SK-N-SH (cell line): ENCODE measurements at regions of chr11 and their contacts with region 1.

Region 1: GRCh38 chr11:75241036-75241905 is 697 bp downstream of the TPBGL start:
- DNase-seq: peak; percentile 98
- H3K4me3 ChIP-seq: peak overlapping the region; percentile 53
- H3K27ac ChIP-seq: no peak overlapping the region; a peak in 1 of 4 replicates
- H3K4me1 ChIP-seq: no peaks in the 10 kb centered on the region; a peak in 1 of 4 replicates
- H3K27me3 ChIP-seq: peaks cover 37% of the 10 kb centered on the region
- CTCF ChIP-seq: peak; percentile 60
- EP300 ChIP-seq: no peak
- RAD21 ChIP-seq: peak; percentile 71

Region 2: GRCh38 chr11:74473382-74474173 is 767.7 kb before region 1 on chr11:
- CTCF ChIA-PET with region 1: no interaction called
- POLR2A ChIA-PET with region 1: no interaction called
- DNase-seq: no peak
- H3K4me3 ChIP-seq: no peak overlapping the region
- H3K27ac ChIP-seq: no peak overlapping the region
- H3K4me1 ChIP-seq: peaks cover 0 to 2% of the 10 kb centered on the region in 2 experiments; a peak in 1 of 4 replicates
- H3K27me3 ChIP-seq: peaks cover 6% of the 10 kb centered on the region; the same call in 1 of the 2 replicates
- CTCF ChIP-seq: no peak
- EP300 ChIP-seq: no peak
- RAD21 ChIP-seq: no peak

Region 3: DNA sequence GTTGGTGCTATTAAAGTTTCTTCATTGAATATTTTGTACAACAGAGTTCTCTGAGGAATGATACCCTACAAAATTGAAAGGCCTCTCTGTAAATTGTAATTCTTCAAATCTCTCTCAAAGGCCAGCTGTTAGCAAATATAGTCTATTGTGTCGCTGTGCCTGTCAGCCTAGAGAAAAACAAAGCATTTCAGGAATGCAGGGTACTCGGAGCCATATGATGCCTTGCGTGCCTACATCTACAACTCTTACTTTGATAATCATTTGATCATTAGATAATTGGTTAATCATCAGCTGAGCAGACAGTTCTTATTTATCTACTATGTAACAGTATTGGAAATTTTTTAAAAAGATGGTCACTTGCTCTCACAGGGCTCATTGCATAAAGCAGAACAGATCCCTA is 425.3 kb before region 1 on chr11:
- CTCF ChIA-PET with region 1: no interaction called
- POLR2A ChIA-PET with region 1: no interaction called
- DNase-seq: no peak
- H3K4me3 ChIP-seq: no peak overlapping the region
- H3K27ac ChIP-seq: no peak overlapping the region
- H3K4me1 ChIP-seq: peaks cover 0 to 7% of the 10 kb centered on the region in 2 experiments; a peak in 1 of 4 replicates
- H3K27me3 ChIP-seq: no peaks in the 10 kb centered on the region
- CTCF ChIP-seq: no peak
- EP300 ChIP-seq: no peak
- RAD21 ChIP-seq: no peak

Region 4: DNA sequence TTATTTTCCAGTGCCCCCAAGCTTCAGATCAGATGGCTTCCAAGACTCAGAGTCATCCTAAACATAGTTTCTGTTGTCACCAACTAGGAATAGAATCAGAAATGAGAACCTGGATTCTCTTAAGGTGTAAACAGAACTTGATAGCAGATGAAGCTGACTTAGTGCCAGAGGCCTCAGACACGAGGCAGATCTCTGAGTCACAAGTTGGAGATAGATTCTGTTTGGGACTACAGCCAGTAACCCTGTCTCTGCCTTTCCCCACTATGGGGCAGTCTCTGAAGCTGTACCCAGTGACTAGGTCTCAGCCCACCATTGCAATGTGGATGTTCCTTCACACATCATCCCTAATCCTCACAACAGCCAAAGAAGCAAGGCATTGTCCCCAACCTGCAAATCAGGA is 227.1 kb before region 1 on chr11:
- CTCF ChIA-PET with region 1: interaction called, 17 read pairs
- POLR2A ChIA-PET with region 1: no interaction called
- DNase-seq: no peak
- H3K4me3 ChIP-seq: no peak overlapping the region
- H3K27ac ChIP-seq: peak overlapping the region; percentile 25 to 63; a peak in 3 of 4 replicates
- H3K4me1 ChIP-seq: peaks cover 0 to 9% of the 10 kb centered on the region in 2 experiments; a peak in 2 of 4 replicates
- H3K27me3 ChIP-seq: no peaks in the 10 kb centered on the region
- CTCF ChIP-seq: peak; percentile 45
- EP300 ChIP-seq: no peak
- RAD21 ChIP-seq: no peak

Region 5: DNA sequence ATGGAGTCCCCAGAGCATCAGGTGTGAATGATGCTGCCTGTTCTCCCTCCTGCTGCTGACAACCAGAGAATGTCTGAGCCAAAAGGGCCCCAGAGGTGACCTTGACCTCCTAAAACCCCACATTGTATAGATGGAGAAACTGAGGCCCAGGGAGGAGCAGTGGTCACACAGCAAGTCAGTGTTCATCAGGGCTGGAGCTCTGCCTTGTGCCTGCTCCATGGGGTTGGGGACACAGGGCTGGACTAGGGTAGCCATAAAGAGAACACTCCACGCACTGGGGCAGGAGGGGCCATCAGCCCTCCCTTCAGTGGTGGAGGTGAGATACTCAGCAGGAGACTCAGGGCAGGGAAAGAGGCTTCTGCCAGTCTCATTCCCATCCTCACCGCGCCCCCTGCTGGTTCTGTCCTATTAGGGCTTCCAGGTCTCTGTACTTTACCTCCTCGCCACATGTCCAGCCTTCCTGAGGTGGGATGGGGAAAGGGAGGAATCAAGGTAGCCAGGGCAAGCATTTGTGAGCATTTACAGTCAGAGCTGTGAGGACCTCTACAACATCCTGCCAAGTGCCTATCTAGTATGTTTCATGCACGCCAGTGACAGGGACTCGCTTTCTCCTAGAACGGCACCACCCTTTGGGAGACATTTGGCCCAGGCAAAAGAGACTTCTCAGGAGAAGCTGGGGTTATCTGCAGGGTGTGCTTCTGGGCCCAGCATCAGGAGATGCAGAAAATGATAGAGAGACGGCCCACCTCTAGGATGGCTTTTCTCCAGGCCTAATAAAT is 209.3 kb before region 1 on chr11:
- CTCF ChIA-PET with region 1: interaction called, 258 read pairs
- POLR2A ChIA-PET with region 1: no interaction called
- DNase-seq: peak; percentile 68
- H3K4me3 ChIP-seq: no peak overlapping the region
- H3K27ac ChIP-seq: peak overlapping the region in 1 of 2 experiments; percentile 52; a peak in 2 of 4 replicates
- H3K4me1 ChIP-seq: peaks cover 6 to 11% of the 10 kb centered on the region in 2 experiments; a peak in 2 of 4 replicates
- H3K27me3 ChIP-seq: no peaks in the 10 kb centered on the region
- CTCF ChIP-seq: peak; percentile 73
- EP300 ChIP-seq: no peak
- RAD21 ChIP-seq: peak; percentile 75

Region 6: DNA sequence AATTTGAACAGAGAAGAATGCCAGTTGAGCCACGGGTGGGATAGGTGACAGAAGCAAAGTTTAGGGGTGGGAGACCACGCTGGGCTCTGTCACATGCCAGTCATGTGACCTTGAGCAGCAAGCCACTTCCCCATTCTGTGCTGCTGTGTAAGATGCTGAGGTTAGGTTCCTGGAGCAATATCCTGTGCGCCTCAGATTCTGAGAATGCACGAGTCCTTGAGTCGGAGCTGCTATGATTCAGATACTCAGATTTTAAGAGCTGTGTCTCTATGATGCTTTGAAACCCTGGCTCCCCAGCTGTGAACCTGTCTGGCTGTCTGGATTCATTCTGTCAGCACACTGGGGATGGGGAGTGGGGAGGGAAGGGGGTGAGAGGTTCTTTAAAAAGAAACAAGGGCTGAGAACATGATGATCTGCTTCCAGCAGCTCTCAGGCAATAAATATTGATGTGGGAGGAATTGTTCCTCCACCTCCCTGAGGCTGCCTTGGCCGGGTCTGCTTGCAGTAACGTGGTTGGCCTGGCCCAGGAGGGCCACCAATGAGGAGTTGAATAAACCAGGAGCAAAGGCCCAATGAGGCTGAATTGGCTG is 66.4 kb before region 1 on chr11:
- CTCF ChIA-PET with region 1: interaction called, 18 read pairs
- POLR2A ChIA-PET with region 1: no interaction called
- DNase-seq: no peak
- H3K4me3 ChIP-seq: no peak overlapping the region
- H3K27ac ChIP-seq: no peak overlapping the region
- H3K4me1 ChIP-seq: no peaks in the 10 kb centered on the region; a peak in 1 of 4 replicates
- H3K27me3 ChIP-seq: no peaks in the 10 kb centered on the region
- CTCF ChIP-seq: no peak
- EP300 ChIP-seq: no peak
- RAD21 ChIP-seq: no peak

Region 7: GRCh38 chr11:75204685-75205563 is 36.3 kb before region 1 on chr11:
- CTCF ChIA-PET with region 1: interaction called, 362 read pairs
- POLR2A ChIA-PET with region 1: no interaction called
- DNase-seq: peak; percentile 88
- H3K4me3 ChIP-seq: no peak overlapping the region; a peak in 1 of 4 replicates
- H3K27ac ChIP-seq: no peak overlapping the region
- H3K4me1 ChIP-seq: peaks cover 0 to 9% of the 10 kb centered on the region in 2 experiments; a peak in 1 of 4 replicates
- H3K27me3 ChIP-seq: no peaks in the 10 kb centered on the region; the same call in 1 of the 2 replicates
- CTCF ChIP-seq: peak; percentile 87
- EP300 ChIP-seq: no peak
- RAD21 ChIP-seq: peak; percentile 90

Region 8: DNA sequence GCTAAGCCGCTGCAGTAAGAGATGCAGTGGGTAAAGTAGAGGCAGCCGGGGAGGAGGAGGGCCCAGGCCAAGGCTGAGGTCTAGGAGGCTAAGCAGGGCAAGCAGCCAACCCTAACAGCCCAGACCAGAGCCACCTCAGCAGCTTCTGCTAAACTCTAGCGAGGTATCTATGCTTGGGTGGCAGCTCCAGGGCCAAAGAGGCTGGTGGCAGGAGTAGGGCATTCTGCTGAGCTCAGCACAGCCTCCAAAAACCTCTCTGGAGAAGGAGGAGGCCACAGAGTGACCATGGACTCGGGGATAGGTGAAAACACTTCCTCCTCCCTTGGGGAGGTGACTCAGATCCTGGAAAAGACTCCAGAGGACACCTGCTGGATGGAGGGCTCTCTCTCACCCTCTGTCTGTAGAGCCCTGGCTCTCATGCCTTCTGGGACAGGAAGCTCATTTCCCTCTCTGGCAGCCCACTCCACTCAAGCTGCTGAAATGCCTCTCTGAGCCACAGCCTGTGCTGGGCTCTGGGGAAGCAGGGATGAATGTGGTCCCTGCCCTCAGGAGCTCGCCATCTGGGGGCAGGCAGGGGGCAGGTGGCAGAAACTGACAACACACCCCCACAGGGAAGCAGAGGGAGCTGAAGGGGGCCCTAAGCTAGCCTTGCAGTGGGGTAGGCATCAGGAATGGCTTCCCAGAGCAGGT is 17.2 kb before region 1 on chr11:
- CTCF ChIA-PET with region 1: interaction called, 117 read pairs
- POLR2A ChIA-PET with region 1: interaction called, 4 read pairs
- DNase-seq: no peak
- H3K4me3 ChIP-seq: no peak overlapping the region
- H3K27ac ChIP-seq: no peak overlapping the region
- H3K4me1 ChIP-seq: peaks cover 0 to 2% of the 10 kb centered on the region in 2 experiments; a peak in 1 of 4 replicates
- H3K27me3 ChIP-seq: 0 out of 2 replicates have a peak, but pooled peaks cover 5% of the 10 kb centered on the region
- CTCF ChIP-seq: no peak
- EP300 ChIP-seq: no peak
- RAD21 ChIP-seq: no peak; the same call in 1 of the 2 replicates

Region 9: GRCh38 chr11:75313513-75314272 is 72.4 kb after region 1 on chr11:
- CTCF ChIA-PET with region 1: no interaction called
- POLR2A ChIA-PET with region 1: no interaction called
- DNase-seq: no peak
- H3K4me3 ChIP-seq: no peak overlapping the region
- H3K27ac ChIP-seq: no peak overlapping the region
- H3K4me1 ChIP-seq: peaks cover 0 to 17% of the 10 kb centered on the region in 2 experiments; a peak in 2 of 4 replicates
- H3K27me3 ChIP-seq: no peaks in the 10 kb centered on the region
- CTCF ChIP-seq: no peak
- EP300 ChIP-seq: no peak
- RAD21 ChIP-seq: no peak

Region 10: GRCh38 chr11:75371941-75372789 is 130.9 kb after region 1 on chr11:
- CTCF ChIA-PET with region 1: no interaction called
- POLR2A ChIA-PET with region 1: no interaction called
- DNase-seq: no peak
- H3K4me3 ChIP-seq: no peak overlapping the region
- H3K27ac ChIP-seq: no peak overlapping the region
- H3K4me1 ChIP-seq: no peaks in the 10 kb centered on the region
- H3K27me3 ChIP-seq: no peaks in the 10 kb centered on the region
- CTCF ChIP-seq: no peak
- EP300 ChIP-seq: no peak
- RAD21 ChIP-seq: no peak